ENCODE measurements at regions of chr3 and their contacts with region 1.

Region 1: GRCh38 chr3:15332405-15333098 is at the start of gene SH3BP5:
- DNase-seq: peak; percentile 86
- ATAC-seq: peak; percentile 85
- H3K4me3 ChIP-seq: peak within 1 kb of the TSS; percentile 75 to 98 (median 92)
- H3K4me3 Mint-ChIP-seq: peak within 1 kb of the TSS; percentile 93
- H3K27ac ChIP-seq: peak within 1 kb of the TSS; percentile 76 to 84
- H3K27ac Mint-ChIP-seq: peak within 1 kb of the TSS; percentile 94
- H3K4me1 ChIP-seq: peaks cover 49% of the 10 kb centered on the region in 2 donors
- H3K4me1 Mint-ChIP-seq: peaks cover 58% of the 10 kb centered on the region
- H3K27me3 ChIP-seq: no peaks in the 10 kb centered on the region
- H3K27me3 Mint-ChIP-seq: no peaks in the 10 kb centered on the region
- CTCF ChIP-seq: peak; percentile 75
- total RNA-seq, gene SH3BP5: 73.6 and 76.6 TPM in 2 replicates

Region 2: DNA sequence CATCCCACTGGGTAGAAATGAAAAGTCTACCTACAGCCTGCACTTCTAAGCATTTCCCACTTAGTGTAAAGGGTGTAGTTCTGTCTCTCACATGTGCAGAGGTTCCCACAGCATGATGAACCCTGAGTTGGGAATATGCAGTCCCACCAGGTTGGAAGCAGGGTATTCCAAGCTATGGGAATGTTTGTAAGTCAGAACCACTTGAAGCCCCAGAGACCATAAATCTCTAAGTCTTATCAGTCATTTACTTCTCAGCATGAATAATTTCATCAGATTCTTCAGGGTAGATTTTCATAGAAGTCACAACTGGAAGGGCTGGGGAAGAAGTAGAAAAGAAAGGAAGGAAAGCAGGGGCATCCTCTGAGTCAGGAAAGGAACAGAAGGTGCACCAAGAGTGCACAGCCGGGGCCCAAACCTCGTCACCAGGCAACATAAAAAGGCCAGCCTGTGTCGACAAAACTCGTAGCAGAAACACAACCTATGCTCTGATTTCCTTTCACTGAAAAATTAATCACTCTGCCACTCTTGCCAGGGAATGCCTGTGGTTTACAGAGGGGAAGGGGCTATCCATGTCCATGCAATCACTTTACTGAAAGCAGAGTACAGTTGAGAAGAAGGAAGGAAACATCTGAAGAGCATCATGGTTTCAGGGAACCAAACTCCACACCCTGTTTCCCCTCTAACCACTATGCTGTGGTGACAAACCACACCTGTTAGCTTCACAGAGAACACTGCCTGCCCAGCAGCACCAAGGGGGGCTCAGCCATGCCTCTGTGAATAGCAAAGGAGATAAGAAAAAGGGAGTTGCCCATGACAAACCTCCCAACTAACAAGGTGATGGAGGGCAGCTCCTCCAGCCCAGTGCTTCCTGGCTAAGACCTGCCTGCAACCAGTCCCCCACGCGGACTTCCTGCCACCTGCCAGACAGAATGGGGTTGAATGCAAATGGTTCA is 40.7 kb before region 1 on chr3:
- CTCF ChIA-PET with region 1: interaction called, 25 read pairs
- POLR2A ChIA-PET with region 1: interaction called, 8 read pairs
- intact Hi-C with region 1: loop called (anchors 1 kb)
- DNase-seq: peak; percentile 87
- ATAC-seq: peak; percentile 80
- H3K4me3 ChIP-seq: peak overlapping the region in 3 of 5 experiments; percentile 5 to 30 (median 27)
- H3K4me3 Mint-ChIP-seq: peak overlapping the region; percentile 83
- H3K27ac ChIP-seq: peak overlapping the region; percentile 58 to 87
- H3K27ac Mint-ChIP-seq: peak overlapping the region; percentile 97
- H3K4me1 ChIP-seq: peaks cover 96 to 99% of the 10 kb centered on the region in 2 donors
- H3K4me1 Mint-ChIP-seq: peaks cover 89% of the 10 kb centered on the region
- H3K27me3 ChIP-seq: no peaks in the 10 kb centered on the region
- H3K27me3 Mint-ChIP-seq: no peaks in the 10 kb centered on the region
- CTCF ChIP-seq: no peak

Region 3: GRCh38 chr3:15319575-15319974 is 13.0 kb before region 1 on chr3:
- CTCF ChIA-PET with region 1: interaction called, 21 read pairs
- POLR2A ChIA-PET with region 1: interaction called, 10 read pairs
- intact Hi-C with region 1: loop called (anchors 2 kb)
- DNase-seq: no peak
- ATAC-seq: no peak
- H3K4me3 ChIP-seq: no peak overlapping the region
- H3K4me3 Mint-ChIP-seq: peak overlapping the region; percentile 39
- H3K27ac ChIP-seq: peak overlapping the region in 1 of 2 donors; percentile 32
- H3K27ac Mint-ChIP-seq: peak overlapping the region; percentile 65
- H3K4me1 ChIP-seq: peaks cover 78 to 91% of the 10 kb centered on the region in 2 donors
- H3K4me1 Mint-ChIP-seq: peaks cover 87% of the 10 kb centered on the region
- H3K27me3 ChIP-seq: no peaks in the 10 kb centered on the region
- H3K27me3 Mint-ChIP-seq: no peaks in the 10 kb centered on the region
- CTCF ChIP-seq: no peak

Region 4: GRCh38 chr3:15361494-15362212 is 29.1 kb after region 1 on chr3:
- CTCF ChIA-PET with region 1: interaction called, 41 read pairs
- POLR2A ChIA-PET with region 1: interaction called, 9 read pairs
- intact Hi-C with region 1: loop called (anchors 1 kb)
- DNase-seq: peak; percentile 64
- ATAC-seq: peak; percentile 66
- H3K4me3 ChIP-seq: peak overlapping the region; percentile 5 to 54 (median 19)
- H3K4me3 Mint-ChIP-seq: peak overlapping the region; percentile 76
- H3K27ac ChIP-seq: peak overlapping the region; percentile 95 to 96
- H3K27ac Mint-ChIP-seq: peak overlapping the region; percentile 80
- H3K4me1 ChIP-seq: peaks cover 48 to 63% of the 10 kb centered on the region in 2 donors
- H3K4me1 Mint-ChIP-seq: peaks cover 59% of the 10 kb centered on the region
- H3K27me3 ChIP-seq: no peaks in the 10 kb centered on the region
- H3K27me3 Mint-ChIP-seq: no peaks in the 10 kb centered on the region
- CTCF ChIP-seq: no peak

Region 5: GRCh38 chr3:15377961-15378791 is 45.6 kb after region 1 on chr3:
- CTCF ChIA-PET with region 1: interaction called, 29 read pairs
- POLR2A ChIA-PET with region 1: interaction called, 3 read pairs
- intact Hi-C with region 1: loop called (anchors 1 kb)
- DNase-seq: peak; percentile 97
- ATAC-seq: peak; percentile 90
- H3K4me3 ChIP-seq: peak overlapping the region in 1 of 5 experiments; percentile 9
- H3K4me3 Mint-ChIP-seq: peak overlapping the region; percentile 53
- H3K27ac ChIP-seq: peak overlapping the region; percentile 88 to 91
- H3K27ac Mint-ChIP-seq: peak overlapping the region; percentile 95
- H3K4me1 ChIP-seq: peaks cover 37% of the 10 kb centered on the region in 2 donors
- H3K4me1 Mint-ChIP-seq: peaks cover 29% of the 10 kb centered on the region
- H3K27me3 ChIP-seq: no peaks in the 10 kb centered on the region
- H3K27me3 Mint-ChIP-seq: no peaks in the 10 kb centered on the region
- CTCF ChIP-seq: peak; percentile 96

Region 6: DNA sequence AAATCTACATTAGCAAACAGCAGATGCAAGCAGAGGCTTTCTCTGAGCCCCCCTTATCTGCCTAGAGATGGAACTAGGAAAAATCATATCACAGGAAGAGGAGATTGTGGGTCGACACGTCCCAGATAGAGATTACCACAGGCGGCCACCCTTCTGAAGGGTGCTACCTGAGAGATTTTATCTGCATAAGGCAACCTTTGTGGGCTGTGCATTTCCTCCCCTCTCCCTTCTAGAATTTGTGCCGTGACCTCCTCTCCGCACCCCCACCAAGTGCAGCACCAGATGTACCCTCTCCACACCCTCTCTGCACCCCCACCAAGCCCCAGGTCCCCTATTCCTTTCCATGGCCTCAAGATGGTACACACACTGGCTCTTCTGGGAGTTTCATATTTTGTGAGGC is 67.4 kb after region 1 on chr3:
- CTCF ChIA-PET with region 1: interaction called, 13 read pairs
- POLR2A ChIA-PET with region 1: interaction called, 3 read pairs
- intact Hi-C with region 1: no loop called
- DNase-seq: no peak
- ATAC-seq: no peak
- H3K4me3 ChIP-seq: no peak overlapping the region
- H3K4me3 Mint-ChIP-seq: no peak overlapping the region
- H3K27ac ChIP-seq: no peak overlapping the region
- H3K27ac Mint-ChIP-seq: no peak overlapping the region
- H3K4me1 ChIP-seq: peaks cover 24 to 31% of the 10 kb centered on the region in 2 donors
- H3K4me1 Mint-ChIP-seq: peaks cover 39% of the 10 kb centered on the region
- H3K27me3 ChIP-seq: no peaks in the 10 kb centered on the region
- H3K27me3 Mint-ChIP-seq: no peaks in the 10 kb centered on the region
- CTCF ChIP-seq: no peak

Region 7: GRCh38 chr3:15420871-15421270 is 88.3 kb after region 1 on chr3:
- CTCF ChIA-PET with region 1: no interaction called
- POLR2A ChIA-PET with region 1: no interaction called
- intact Hi-C with region 1: no loop called
- DNase-seq: no peak
- ATAC-seq: no peak
- H3K4me3 ChIP-seq: no peak overlapping the region
- H3K4me3 Mint-ChIP-seq: no peak overlapping the region
- H3K27ac ChIP-seq: no peak overlapping the region
- H3K27ac Mint-ChIP-seq: no peak overlapping the region
- H3K4me1 ChIP-seq: peaks cover 0 to 1% of the 10 kb centered on the region in 2 donors
- H3K4me1 Mint-ChIP-seq: peaks cover 11% of the 10 kb centered on the region
- H3K27me3 ChIP-seq: no peaks in the 10 kb centered on the region
- H3K27me3 Mint-ChIP-seq: no peaks in the 10 kb centered on the region
- CTCF ChIP-seq: no peak